CD4-positive, alpha-beta memory T cell (primary cell): ENCODE measurements at regions of chr14 and their contacts with region 1.

Region 1: GRCh38 chr14:64503478-64504309 is at the start of gene ZBTB25:
- DNase-seq: peak; percentile 97 to 100 (median 98)
- H3K4me3 ChIP-seq: peak within 1 kb of the TSS; percentile 78 to 87
- H3K4me3 Mint-ChIP-seq: peak within 1 kb of the TSS; percentile 96 to 100 (median 98)
- H3K27ac ChIP-seq: peak within 1 kb of the TSS; percentile 100
- H3K27ac Mint-ChIP-seq: peak within 1 kb of the TSS; percentile 99 to 100 (median 100)
- H3K4me1 ChIP-seq: peaks cover 59% of the 10 kb centered on the region
- H3K4me1 Mint-ChIP-seq: peaks cover 33 to 84% (median 42%) of the 10 kb centered on the region in 4 donors
- H3K27me3 ChIP-seq: no peaks in the 10 kb centered on the region
- H3K27me3 Mint-ChIP-seq: peaks cover 0 to 2% of the 10 kb centered on the region in 2 donors
- total RNA-seq, gene ZBTB25: 84.1 to 87.5 TPM

Region 2: DNA sequence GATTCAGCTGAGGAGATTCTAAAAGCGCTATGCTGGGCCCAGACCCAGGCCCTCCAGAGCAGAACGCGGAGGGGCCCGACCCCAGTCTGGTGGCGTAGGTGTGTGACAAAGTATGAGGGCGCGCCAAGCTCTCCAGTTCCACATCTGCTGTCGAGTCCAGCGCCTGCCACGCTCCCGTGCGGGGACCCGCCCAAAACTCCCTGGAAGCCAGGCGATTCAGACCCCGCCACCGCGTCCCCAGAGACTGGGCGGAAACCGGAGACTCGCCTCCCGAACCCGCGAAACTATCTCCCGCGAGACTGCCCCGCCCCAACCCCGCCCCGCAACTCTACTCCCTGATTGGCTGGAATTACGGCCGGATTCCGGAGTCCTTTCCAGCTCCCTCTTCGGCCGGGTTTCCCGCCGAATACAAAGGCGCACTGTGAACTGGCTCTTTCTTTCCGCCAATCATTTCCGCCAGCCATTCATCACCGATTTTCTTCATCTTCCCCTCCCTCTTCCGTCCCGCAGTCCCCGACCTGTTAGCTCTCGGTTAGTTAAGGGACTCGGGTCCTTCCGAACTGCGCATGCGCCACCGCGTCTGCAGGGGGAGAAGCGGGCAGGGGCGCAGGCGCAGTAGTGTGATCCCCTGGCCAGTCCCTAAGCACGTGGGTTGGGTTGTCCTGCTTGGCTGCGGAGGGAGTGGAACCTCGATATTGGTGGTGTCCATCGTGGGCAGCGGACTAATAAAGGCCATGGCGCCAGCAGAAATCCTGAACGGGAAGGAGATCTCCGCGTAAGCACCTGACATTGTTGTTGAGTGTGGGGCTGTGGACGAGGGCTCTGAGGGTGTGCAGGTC is 115.8 kb before region 1 on chr14 and contains the start of gene MTHFD1:
- CTCF ChIA-PET with region 1: interaction called, 3 read pairs
- POLR2A ChIA-PET with region 1: interaction called, 47 read pairs
- intact Hi-C with region 1: loop called (anchors 1 kb)
- DNase-seq: peak; percentile 95 to 97 (median 96)
- H3K4me3 ChIP-seq: peak within 1 kb of the TSS; percentile 68 to 83
- H3K4me3 Mint-ChIP-seq: peak within 1 kb of the TSS; percentile 94 to 99 (median 96)
- H3K27ac ChIP-seq: peak within 1 kb of the TSS; percentile 60
- H3K27ac Mint-ChIP-seq: peak within 1 kb of the TSS; percentile 91 to 99 (median 97)
- H3K4me1 ChIP-seq: peaks cover 36% of the 10 kb centered on the region
- H3K4me1 Mint-ChIP-seq: peaks cover 17 to 51% (median 29%) of the 10 kb centered on the region in 4 donors
- H3K27me3 ChIP-seq: no peaks in the 10 kb centered on the region
- H3K27me3 Mint-ChIP-seq: no peaks in the 10 kb centered on the region
- total RNA-seq, gene MTHFD1: 27.9 to 29.8 TPM

Region 3: GRCh38 chr14:64491637-64492036 is 12.1 kb before region 1 on chr14:
- CTCF ChIA-PET with region 1: interaction called, 69 read pairs
- POLR2A ChIA-PET with region 1: interaction called, 318 read pairs
- intact Hi-C with region 1: no loop called
- DNase-seq: no peak
- H3K4me3 ChIP-seq: no peak overlapping the region
- H3K4me3 Mint-ChIP-seq: peak overlapping the region in 3 of 8 donors; percentile 21 to 43 (median 21)
- H3K27ac ChIP-seq: no peak overlapping the region
- H3K27ac Mint-ChIP-seq: peak overlapping the region in 4 of 7 donors; percentile 11 to 76 (median 50)
- H3K4me1 ChIP-seq: peaks cover 47% of the 10 kb centered on the region
- H3K4me1 Mint-ChIP-seq: peaks cover 40 to 62% (median 49%) of the 10 kb centered on the region in 4 donors
- H3K27me3 ChIP-seq: no peaks in the 10 kb centered on the region
- H3K27me3 Mint-ChIP-seq: no peaks in the 10 kb centered on the region

Region 4: DNA sequence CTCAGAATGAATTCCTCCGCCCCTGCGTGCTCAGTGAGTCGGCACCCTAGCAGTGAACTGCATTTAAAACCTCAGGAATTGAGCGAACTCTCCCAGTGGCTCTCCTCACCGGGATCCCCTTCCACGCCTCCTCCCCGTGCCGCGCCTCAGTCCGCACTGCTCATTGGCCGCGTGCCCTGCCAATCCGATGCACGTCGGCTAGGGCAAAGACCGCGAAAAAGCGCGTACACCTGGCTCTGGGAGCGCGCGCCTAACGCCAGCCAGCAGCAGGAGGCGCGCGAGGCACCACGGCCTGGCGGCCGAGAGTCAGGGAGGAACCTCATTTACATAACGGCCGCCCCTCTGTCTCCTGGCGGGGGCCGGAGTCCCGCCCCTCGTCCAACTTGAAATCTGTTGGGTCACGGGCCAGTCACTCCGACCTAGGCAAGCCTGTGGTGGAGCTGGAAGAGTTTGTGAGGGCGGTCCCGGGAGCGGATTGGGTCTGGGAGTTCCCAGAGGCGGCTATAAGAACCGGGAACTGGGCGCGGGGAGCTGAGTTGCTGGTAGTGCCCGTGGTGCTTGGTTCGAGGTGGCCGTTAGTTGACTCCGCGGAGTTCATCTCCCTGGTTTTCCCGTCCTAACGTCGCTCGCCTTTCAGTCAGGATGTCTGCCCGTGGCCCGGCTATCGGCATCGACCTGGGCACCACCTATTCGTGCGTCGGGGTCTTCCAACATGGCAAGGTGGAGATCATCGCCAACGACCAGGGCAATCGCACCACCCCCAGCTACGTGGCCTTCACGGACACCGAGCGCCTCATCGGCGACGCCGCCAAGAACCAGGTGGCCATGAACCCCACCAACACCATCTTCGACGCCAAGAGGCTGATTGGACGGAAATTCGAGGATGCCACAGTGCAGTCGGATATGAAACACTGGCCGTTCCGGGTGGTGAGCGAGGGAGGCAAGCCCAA is 36.8 kb after region 1 on chr14 and contains the start of gene HSPA2:
- CTCF ChIA-PET with region 1: no interaction called
- POLR2A ChIA-PET with region 1: interaction called, 75 read pairs
- intact Hi-C with region 1: loop called (anchors 1 kb)
- DNase-seq: peak; percentile 92 to 94 (median 94)
- H3K4me3 ChIP-seq: peak within 1 kb of the TSS; percentile 65 to 86
- H3K4me3 Mint-ChIP-seq: peak within 1 kb of the TSS; percentile 92 to 99 (median 96)
- H3K27ac ChIP-seq: peak within 1 kb of the TSS; percentile 43
- H3K27ac Mint-ChIP-seq: peak within 1 kb of the TSS; percentile 86 to 98 (median 90)
- H3K4me1 ChIP-seq: peaks cover 24% of the 10 kb centered on the region
- H3K4me1 Mint-ChIP-seq: peaks cover 12 to 39% (median 29%) of the 10 kb centered on the region in 4 donors
- H3K27me3 ChIP-seq: no peaks in the 10 kb centered on the region
- H3K27me3 Mint-ChIP-seq: peaks cover 0 to 3% of the 10 kb centered on the region in 2 donors
- total RNA-seq, gene HSPA2: 1.3 to 1.5 TPM